ENCODE measurements at regions of chr13 and their contacts with region 1.

Region 1: DNA sequence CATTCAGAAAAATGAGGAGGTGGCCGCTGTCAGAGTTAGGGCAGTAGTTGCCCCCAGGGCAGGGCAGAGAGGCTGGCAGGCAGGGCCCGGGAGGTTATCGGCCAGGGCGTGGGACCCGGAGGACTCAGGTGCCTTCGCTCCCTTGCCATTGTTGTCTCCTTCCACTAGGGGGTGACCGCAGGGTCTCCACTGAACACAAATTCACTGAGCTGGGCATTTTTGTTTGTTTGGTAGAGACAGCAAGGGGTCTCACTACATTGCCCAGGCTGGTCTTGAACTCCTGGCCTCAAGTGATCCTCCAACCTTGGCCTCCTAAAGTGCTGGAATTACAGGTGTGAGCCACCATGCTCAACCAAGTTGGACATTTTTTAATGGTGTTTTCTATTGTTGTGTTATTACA is 25.1 kb downstream of the CARS2 start:
- DNase-seq: peak; percentile 39
- ATAC-seq: no peak
- H3K4me3 ChIP-seq: no peak overlapping the region
- H3K4me3 Mint-ChIP-seq: no peak overlapping the region
- H3K27ac ChIP-seq: peak overlapping the region in 1 of 2 donors; percentile 6
- H3K27ac Mint-ChIP-seq: peak overlapping the region; percentile 42
- H3K4me1 ChIP-seq: peaks cover 19 to 35% of the 10 kb centered on the region in 2 donors
- H3K4me1 Mint-ChIP-seq: peaks cover 37% of the 10 kb centered on the region
- H3K27me3 ChIP-seq: no peaks in the 10 kb centered on the region
- H3K27me3 Mint-ChIP-seq: no peaks in the 10 kb centered on the region
- CTCF ChIP-seq: peak; percentile 56

Region 2: GRCh38 chr13:110471833-110472162 is 209.1 kb before region 1 on chr13:
- CTCF ChIA-PET with region 1: interaction called, 3 read pairs
- POLR2A ChIA-PET with region 1: interaction called, 3 read pairs
- intact Hi-C with region 1: loop called (anchors 2 kb)
- DNase-seq: peak; percentile 89
- ATAC-seq: peak; percentile 94
- H3K4me3 ChIP-seq: peak overlapping the region in 2 of 5 experiments; percentile 17 to 19
- H3K4me3 Mint-ChIP-seq: peak overlapping the region; percentile 85
- H3K27ac ChIP-seq: peak overlapping the region; percentile 80 to 83
- H3K27ac Mint-ChIP-seq: peak overlapping the region; percentile 89
- H3K4me1 ChIP-seq: peaks cover 38 to 50% of the 10 kb centered on the region in 2 donors
- H3K4me1 Mint-ChIP-seq: peaks cover 49% of the 10 kb centered on the region
- H3K27me3 ChIP-seq: peaks cover 0 to 2% (median 0%) of the 10 kb centered on the region in 4 experiments
- H3K27me3 Mint-ChIP-seq: no peaks in the 10 kb centered on the region
- CTCF ChIP-seq: no peak

Region 3: DNA sequence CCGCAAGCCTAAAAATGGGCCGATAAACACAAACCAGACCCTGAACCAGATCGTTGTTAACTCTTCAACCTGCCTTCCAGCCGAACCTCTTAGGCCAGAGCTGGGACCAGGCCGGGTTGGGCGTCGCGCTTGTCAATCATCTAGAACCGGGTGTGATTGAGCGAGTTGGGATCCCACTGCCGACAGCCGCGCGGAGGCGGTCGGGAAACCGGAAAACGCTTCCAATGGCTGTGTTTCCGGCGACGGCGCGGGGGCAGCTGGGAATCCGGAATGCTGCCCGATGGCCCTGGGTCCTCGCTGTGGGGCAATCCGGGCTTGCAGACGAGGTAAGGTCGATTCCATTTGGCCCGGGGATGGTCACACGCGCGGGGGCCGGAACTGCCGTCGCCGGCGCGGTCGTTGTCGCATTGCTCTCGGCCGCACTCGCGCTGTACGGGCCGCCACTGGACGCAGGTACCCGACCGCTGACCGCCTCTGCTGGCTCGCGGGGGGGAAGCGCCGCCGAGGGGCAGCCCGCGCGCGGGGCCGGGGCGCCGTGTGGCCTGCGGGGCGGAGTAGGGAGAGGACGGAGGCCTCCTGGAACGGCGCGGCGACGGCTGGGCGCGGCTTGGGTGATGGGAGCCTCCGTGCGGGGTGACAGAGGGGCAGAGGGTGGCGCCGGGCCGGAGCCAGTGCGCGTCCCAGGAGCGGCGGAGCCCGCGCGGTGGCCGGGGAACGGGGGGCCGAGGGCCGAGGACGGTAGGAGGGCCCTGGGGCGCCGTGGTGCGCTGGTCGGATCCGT is 65.3 kb before region 1 on chr13 and contains the start of gene NAXD:
- CTCF ChIA-PET with region 1: no interaction called
- POLR2A ChIA-PET with region 1: interaction called, 4 read pairs
- intact Hi-C with region 1: loop called (anchors 1 kb)
- DNase-seq: peak; percentile 81
- ATAC-seq: peak; percentile 83
- H3K4me3 ChIP-seq: peak within 1 kb of the TSS; percentile 44 to 84 (median 77)
- H3K4me3 Mint-ChIP-seq: peak within 1 kb of the TSS; percentile 96
- H3K27ac ChIP-seq: peak within 1 kb of the TSS; percentile 31 to 74
- H3K27ac Mint-ChIP-seq: peak within 1 kb of the TSS; percentile 94
- H3K4me1 ChIP-seq: peaks cover 14 to 26% of the 10 kb centered on the region in 2 donors
- H3K4me1 Mint-ChIP-seq: peaks cover 36% of the 10 kb centered on the region
- H3K27me3 ChIP-seq: no peaks in the 10 kb centered on the region
- H3K27me3 Mint-ChIP-seq: no peaks in the 10 kb centered on the region
- CTCF ChIP-seq: no peak
- total RNA-seq, gene NAXD: 33.3 and 36.0 TPM in 2 replicates

Region 4: GRCh38 chr13:110652231-110652730 is 28.6 kb before region 1 on chr13:
- CTCF ChIA-PET with region 1: interaction called, 12 read pairs
- POLR2A ChIA-PET with region 1: interaction called, 8 read pairs
- intact Hi-C with region 1: no loop called
- DNase-seq: peak; percentile 27
- ATAC-seq: peak; percentile 62
- H3K4me3 ChIP-seq: peak overlapping the region in 1 of 5 experiments; percentile 24
- H3K4me3 Mint-ChIP-seq: peak overlapping the region; percentile 84
- H3K27ac ChIP-seq: peak overlapping the region; percentile 44 to 56
- H3K27ac Mint-ChIP-seq: peak overlapping the region; percentile 83
- H3K4me1 ChIP-seq: peaks cover 53 to 54% of the 10 kb centered on the region in 2 donors
- H3K4me1 Mint-ChIP-seq: peaks cover 66% of the 10 kb centered on the region
- H3K27me3 ChIP-seq: no peaks in the 10 kb centered on the region
- H3K27me3 Mint-ChIP-seq: no peaks in the 10 kb centered on the region
- CTCF ChIP-seq: no peak

Region 5: GRCh38 chr13:110705826-110706569 is 25.1 kb after region 1 on chr13 and contains the start of gene CARS2:
- CTCF ChIA-PET with region 1: interaction called, 16 read pairs
- POLR2A ChIA-PET with region 1: interaction called, 62 read pairs
- intact Hi-C with region 1: loop called (anchors 1 kb)
- DNase-seq: peak; percentile 98
- ATAC-seq: peak; percentile 95
- H3K4me3 ChIP-seq: peak within 1 kb of the TSS; percentile 63 to 73 (median 72)
- H3K4me3 Mint-ChIP-seq: peak within 1 kb of the TSS; percentile 96
- H3K27ac ChIP-seq: peak within 1 kb of the TSS; percentile 53 to 66
- H3K27ac Mint-ChIP-seq: peak within 1 kb of the TSS; percentile 91
- H3K4me1 ChIP-seq: peaks cover 21 to 32% of the 10 kb centered on the region in 2 donors
- H3K4me1 Mint-ChIP-seq: peaks cover 40% of the 10 kb centered on the region
- H3K27me3 ChIP-seq: no peaks in the 10 kb centered on the region
- H3K27me3 Mint-ChIP-seq: no peaks in the 10 kb centered on the region
- CTCF ChIP-seq: peak; percentile 40
- total RNA-seq, gene CARS2: 154 and 168 TPM in 2 replicates

Region 6: GRCh38 chr13:110746443-110746842 is 65.6 kb after region 1 on chr13:
- CTCF ChIA-PET with region 1: no interaction called
- POLR2A ChIA-PET with region 1: no interaction called
- intact Hi-C with region 1: no loop called
- DNase-seq: no peak
- ATAC-seq: no peak
- H3K4me3 ChIP-seq: no peak overlapping the region
- H3K4me3 Mint-ChIP-seq: no peak overlapping the region
- H3K27ac ChIP-seq: no peak overlapping the region
- H3K27ac Mint-ChIP-seq: no peak overlapping the region
- H3K4me1 ChIP-seq: no peaks in the 10 kb centered on the region
- H3K4me1 Mint-ChIP-seq: no peaks in the 10 kb centered on the region
- H3K27me3 ChIP-seq: no peaks in the 10 kb centered on the region
- H3K27me3 Mint-ChIP-seq: no peaks in the 10 kb centered on the region
- CTCF ChIP-seq: no peak

Region 7: GRCh38 chr13:110811771-110812120 is 130.9 kb after region 1 on chr13:
- CTCF ChIA-PET with region 1: no interaction called
- POLR2A ChIA-PET with region 1: no interaction called
- intact Hi-C with region 1: no loop called
- DNase-seq: no peak
- ATAC-seq: no peak
- H3K4me3 ChIP-seq: no peak overlapping the region
- H3K4me3 Mint-ChIP-seq: peak overlapping the region; percentile 36
- H3K27ac ChIP-seq: no peak overlapping the region
- H3K27ac Mint-ChIP-seq: no peak overlapping the region
- H3K4me1 ChIP-seq: peaks cover 0 to 6% of the 10 kb centered on the region in 2 donors
- H3K4me1 Mint-ChIP-seq: peaks cover 7% of the 10 kb centered on the region
- H3K27me3 ChIP-seq: peaks cover 0 to 38% (median 12%) of the 10 kb centered on the region in 4 experiments
- H3K27me3 Mint-ChIP-seq: peaks cover 48% of the 10 kb centered on the region
- CTCF ChIP-seq: no peak

Measured in B cell (primary cell).